ENCODE measurements at regions of chr18 and their contacts with region 1.

Region 1: GRCh38 chr18:29083545-29083944 is 906.6 kb upstream of the CDH2 start:
- DNase-seq: no peak
- H3K4me3 ChIP-seq: no peak overlapping the region
- H3K27ac ChIP-seq: no peak overlapping the region
- H3K4me1 ChIP-seq: no peaks in the 10 kb centered on the region
- H3K27me3 ChIP-seq: no peaks in the 10 kb centered on the region
- CTCF ChIP-seq: no peak
- EP300 ChIP-seq: no peak
- POLR2A ChIP-seq: no peak

Region 2: DNA sequence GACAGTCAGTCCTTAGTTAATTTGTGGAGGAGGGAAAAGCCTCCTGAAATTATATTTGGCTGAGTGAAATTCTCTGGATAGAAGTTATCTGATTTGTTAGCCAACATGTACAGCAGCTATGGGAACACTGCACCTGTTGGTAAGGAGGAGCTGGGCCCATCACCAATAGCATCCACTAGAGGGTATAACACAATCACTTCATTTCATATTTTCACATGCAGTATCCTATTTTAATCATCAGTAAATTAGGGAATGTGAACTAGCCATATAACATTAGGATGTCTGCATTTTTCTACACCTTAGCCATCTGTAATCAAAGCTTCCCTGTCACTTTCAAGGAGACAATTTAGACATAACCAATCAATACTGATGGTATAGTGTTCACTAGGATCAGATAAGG is 88.2 kb before region 1 on chr18:
- in situ Hi-C with region 1: no loop called
- intact Hi-C with region 1: no loop called
- DNase-seq: no peak
- H3K4me3 ChIP-seq: no peak overlapping the region
- H3K27ac ChIP-seq: no peak overlapping the region
- H3K4me1 ChIP-seq: no peaks in the 10 kb centered on the region
- H3K27me3 ChIP-seq: no peaks in the 10 kb centered on the region
- CTCF ChIP-seq: no peak
- EP300 ChIP-seq: no peak
- POLR2A ChIP-seq: no peak

Region 3: GRCh38 chr18:29147944-29148343 is 64.4 kb after region 1 on chr18:
- in situ Hi-C with region 1: loop called in 1 of 4 experiments (anchors 10 kb)
- intact Hi-C with region 1: no loop called
- DNase-seq: no peak
- H3K4me3 ChIP-seq: no peak overlapping the region
- H3K27ac ChIP-seq: no peak overlapping the region
- H3K4me1 ChIP-seq: no peaks in the 10 kb centered on the region
- H3K27me3 ChIP-seq: no peaks in the 10 kb centered on the region
- CTCF ChIP-seq: no peak
- EP300 ChIP-seq: no peak
- POLR2A ChIP-seq: no peak

Measured in transverse colon (tissue), 4 donors.